ENCODE measurements at regions of chr7 and their contacts with region 1.

Region 1: GRCh38 chr7:18212758-18213157 is 185.1 kb upstream of the PRPS1L1 start:
- DNase-seq: no peak
- ATAC-seq: peak in 1 of 2 donors; percentile 59

Region 2: GRCh38 chr7:18290223-18290622 is 77.5 kb after region 1 on chr7:
- intact Hi-C with region 1: loop called in 1 of 2 experiments (anchors 10 kb)
- DNase-seq: no peak
- ATAC-seq: peak; percentile 17 to 42

Measured in left cardiac atrium (tissue), 4 donors.